ENCODE measurements at regions of chr2 and their contacts with region 1.

Region 1: GRCh38 chr2:112645310-112646101 is at the start of gene SLC20A1:
- DNase-seq: peak; percentile 98
- ATAC-seq: peak; percentile 94
- H3K4me3 ChIP-seq: peak within 1 kb of the TSS; percentile 94
- H3K27ac ChIP-seq: peak within 1 kb of the TSS; percentile 93
- H3K4me1 ChIP-seq: peaks cover 24 to 66% of the 10 kb centered on the region in 2 experiments
- H3K27me3 ChIP-seq: no peaks in the 10 kb centered on the region
- CTCF ChIP-seq: peak; percentile 74 to 81 (median 79)
- EP300 ChIP-seq: peak; percentile 10; the same call in 1 of the 2 replicates
- POLR2A ChIP-seq: peak; percentile 99
- RAD21 ChIP-seq: peak; percentile 67 to 69
- polyA plus RNA-seq, gene SLC20A1: 53.8 to 56.1 TPM

Region 2: GRCh38 chr2:112626604-112627059 is 18.9 kb before region 1 on chr2:
- CTCF ChIA-PET with region 1: no interaction called
- POLR2A ChIA-PET with region 1: interaction called, 84 read pairs
- in situ Hi-C with region 1: no loop called
- intact Hi-C with region 1: loop called (anchors 2 kb)
- DNase-seq: peak; percentile 52 to 78 (median 64)
- ATAC-seq: peak; percentile 88
- H3K4me3 ChIP-seq: no peak overlapping the region
- H3K27ac ChIP-seq: no peak overlapping the region
- H3K4me1 ChIP-seq: peaks cover 18 to 52% of the 10 kb centered on the region in 2 experiments
- H3K27me3 ChIP-seq: no peaks in the 10 kb centered on the region
- CTCF ChIP-seq: peak; percentile 90 to 91 (median 91)
- EP300 ChIP-seq: no peak
- POLR2A ChIP-seq: no peak
- RAD21 ChIP-seq: peak; percentile 97 to 99

Region 3: DNA sequence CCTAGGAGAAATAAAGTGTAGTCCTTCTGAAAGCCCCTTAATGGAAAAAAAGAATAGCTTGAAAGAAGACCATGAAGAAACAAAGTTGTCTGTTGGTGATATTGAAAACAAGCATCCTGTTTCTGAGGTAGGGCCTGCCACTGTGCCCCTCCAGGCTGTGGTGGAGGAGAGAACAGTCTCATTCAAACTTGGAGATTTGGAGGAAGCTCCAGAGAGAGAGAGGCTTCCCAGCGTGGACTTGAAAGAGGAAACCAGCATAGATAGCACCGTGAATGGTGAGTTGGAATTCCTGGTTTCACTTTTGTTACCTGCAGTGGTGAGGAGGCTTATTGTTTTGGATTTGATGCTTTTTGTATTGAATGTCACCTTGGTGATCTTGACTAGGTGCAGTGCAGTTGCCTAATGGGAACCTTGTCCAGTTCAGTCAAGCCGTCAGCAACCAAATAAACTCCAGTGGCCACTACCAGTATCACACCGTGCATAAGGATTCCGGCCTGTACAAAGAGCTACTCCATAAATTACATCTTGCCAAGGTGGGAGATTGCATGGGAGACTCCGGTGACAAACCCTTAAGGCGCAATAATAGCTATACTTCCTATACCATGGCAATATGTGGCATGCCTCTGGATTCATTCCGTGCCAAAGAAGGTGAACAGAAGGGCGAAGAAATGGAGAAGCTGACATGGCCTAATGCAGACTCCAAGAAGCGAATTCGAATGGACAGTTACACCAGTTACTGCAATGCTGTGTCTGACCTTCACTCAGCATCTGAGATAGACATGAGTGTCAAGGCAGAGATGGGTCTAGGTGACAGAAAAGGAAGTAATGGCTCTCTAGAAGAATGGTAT is 13.5 kb after region 1 on chr2:
- CTCF ChIA-PET with region 1: no interaction called
- POLR2A ChIA-PET with region 1: interaction called, 90 read pairs
- in situ Hi-C with region 1: no loop called
- intact Hi-C with region 1: no loop called
- DNase-seq: no peak
- ATAC-seq: peak; percentile 53
- H3K4me3 ChIP-seq: no peak overlapping the region
- H3K27ac ChIP-seq: peak overlapping the region; percentile 44; the same call in 2 of the 3 replicates
- H3K4me1 ChIP-seq: peaks cover 0 to 32% of the 10 kb centered on the region in 2 experiments; a peak in 4 of 5 replicates
- H3K27me3 ChIP-seq: no peaks in the 10 kb centered on the region
- CTCF ChIP-seq: peak in 1 of 3 experiments; percentile 11; a peak in 1 of 6 replicates
- EP300 ChIP-seq: no peak
- POLR2A ChIP-seq: peak; percentile 35; the same call in 1 of the 2 replicates
- RAD21 ChIP-seq: no peak

Region 4: GRCh38 chr2:112666764-112667122 is 21.2 kb after region 1 on chr2:
- CTCF ChIA-PET with region 1: no interaction called
- POLR2A ChIA-PET with region 1: interaction called, 30 read pairs
- in situ Hi-C with region 1: no loop called
- intact Hi-C with region 1: no loop called
- DNase-seq: peak; percentile 68 to 81 (median 76)
- ATAC-seq: peak; percentile 67
- H3K4me3 ChIP-seq: no peak overlapping the region
- H3K27ac ChIP-seq: peak overlapping the region; percentile 70
- H3K4me1 ChIP-seq: peaks cover 6 to 55% of the 10 kb centered on the region in 2 experiments; a peak in 4 of 5 replicates
- H3K27me3 ChIP-seq: no peaks in the 10 kb centered on the region
- CTCF ChIP-seq: no peak
- EP300 ChIP-seq: peak; percentile 85
- POLR2A ChIP-seq: no peak
- RAD21 ChIP-seq: no peak

Region 5: GRCh38 chr2:112685271-112685884 is 39.9 kb after region 1 on chr2:
- CTCF ChIA-PET with region 1: no interaction called
- POLR2A ChIA-PET with region 1: interaction called, 9 read pairs
- in situ Hi-C with region 1: no loop called
- intact Hi-C with region 1: loop called (anchors 1 kb)
- DNase-seq: peak in 2 of 4 experiments; percentile 37 to 53
- ATAC-seq: peak; percentile 56
- H3K4me3 ChIP-seq: no peak overlapping the region
- H3K27ac ChIP-seq: peak overlapping the region; percentile 86
- H3K4me1 ChIP-seq: peaks cover 44 to 66% of the 10 kb centered on the region in 2 experiments
- H3K27me3 ChIP-seq: no peaks in the 10 kb centered on the region
- CTCF ChIP-seq: peak in 1 of 3 experiments; percentile 43; a peak in 3 of 6 replicates
- EP300 ChIP-seq: no peak; the same call in 1 of the 2 replicates
- POLR2A ChIP-seq: no peak
- RAD21 ChIP-seq: no peak

Region 6: GRCh38 chr2:112706170-112706664 is 60.7 kb after region 1 on chr2:
- CTCF ChIA-PET with region 1: no interaction called
- POLR2A ChIA-PET with region 1: interaction called, 5 read pairs
- in situ Hi-C with region 1: no loop called
- intact Hi-C with region 1: loop called (anchors 5 kb)
- DNase-seq: peak; percentile 92 to 97 (median 94)
- ATAC-seq: peak; percentile 96
- H3K4me3 ChIP-seq: no peak overlapping the region
- H3K27ac ChIP-seq: peak overlapping the region; percentile 73
- H3K4me1 ChIP-seq: peaks cover 32 to 56% of the 10 kb centered on the region in 2 experiments
- H3K27me3 ChIP-seq: no peaks in the 10 kb centered on the region
- CTCF ChIP-seq: peak in 1 of 3 experiments; percentile 3; a peak in 1 of 6 replicates
- EP300 ChIP-seq: peak; percentile 98
- POLR2A ChIP-seq: peak; percentile 68
- RAD21 ChIP-seq: peak; percentile 34

Region 7: DNA sequence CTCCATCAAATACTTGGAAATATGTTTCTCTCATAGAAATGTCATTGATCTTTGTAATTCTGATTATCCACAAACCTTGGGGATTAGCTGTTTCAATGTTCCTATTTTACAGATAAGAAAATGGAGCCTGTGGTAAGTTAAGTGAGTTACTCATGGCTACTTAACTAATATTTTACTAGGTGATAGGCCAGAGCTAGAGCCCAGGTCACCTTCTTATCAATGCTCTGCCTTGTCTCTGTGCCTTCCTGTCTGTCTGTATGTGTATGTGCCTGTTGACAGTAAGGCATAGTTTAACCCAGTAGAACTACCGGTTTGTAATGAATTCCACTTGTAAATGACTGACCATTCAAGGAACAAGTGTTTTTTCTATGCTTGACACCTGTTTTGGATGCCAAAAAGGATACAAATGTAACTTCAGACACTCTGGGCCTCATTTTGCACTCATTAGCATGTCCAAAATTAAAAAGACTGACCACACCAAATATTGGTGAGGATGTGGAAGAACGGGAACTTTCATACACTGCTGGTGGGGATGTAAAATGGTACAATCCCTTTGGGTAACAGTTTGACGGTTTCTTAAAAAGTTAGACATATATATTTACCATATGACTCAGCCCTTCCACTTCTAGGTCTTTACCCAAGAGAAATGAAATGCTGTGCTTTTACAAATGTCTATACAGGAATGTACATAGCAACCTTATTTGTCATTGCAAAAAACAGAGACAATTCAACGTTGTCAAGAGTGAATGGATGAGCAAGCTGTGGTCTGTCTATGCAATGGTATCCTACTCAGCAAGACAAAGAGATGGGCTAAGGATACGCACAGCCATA is 158.4 kb after region 1 on chr2:
- CTCF ChIA-PET with region 1: no interaction called
- POLR2A ChIA-PET with region 1: no interaction called
- in situ Hi-C with region 1: no loop called
- intact Hi-C with region 1: no loop called
- DNase-seq: peak in 3 of 4 experiments; percentile 31 to 52 (median 43)
- ATAC-seq: peak; percentile 70
- H3K4me3 ChIP-seq: no peak overlapping the region
- H3K27ac ChIP-seq: no peak overlapping the region
- H3K4me1 ChIP-seq: peaks cover 0 to 7% of the 10 kb centered on the region in 2 experiments; a peak in 2 of 5 replicates
- H3K27me3 ChIP-seq: no peaks in the 10 kb centered on the region
- CTCF ChIP-seq: no peak
- EP300 ChIP-seq: no peak
- POLR2A ChIP-seq: no peak
- RAD21 ChIP-seq: no peak

Measured in K562 (cell line).